ENCODE measurements at regions of chr3 and their contacts with region 1.

Region 1: DNA sequence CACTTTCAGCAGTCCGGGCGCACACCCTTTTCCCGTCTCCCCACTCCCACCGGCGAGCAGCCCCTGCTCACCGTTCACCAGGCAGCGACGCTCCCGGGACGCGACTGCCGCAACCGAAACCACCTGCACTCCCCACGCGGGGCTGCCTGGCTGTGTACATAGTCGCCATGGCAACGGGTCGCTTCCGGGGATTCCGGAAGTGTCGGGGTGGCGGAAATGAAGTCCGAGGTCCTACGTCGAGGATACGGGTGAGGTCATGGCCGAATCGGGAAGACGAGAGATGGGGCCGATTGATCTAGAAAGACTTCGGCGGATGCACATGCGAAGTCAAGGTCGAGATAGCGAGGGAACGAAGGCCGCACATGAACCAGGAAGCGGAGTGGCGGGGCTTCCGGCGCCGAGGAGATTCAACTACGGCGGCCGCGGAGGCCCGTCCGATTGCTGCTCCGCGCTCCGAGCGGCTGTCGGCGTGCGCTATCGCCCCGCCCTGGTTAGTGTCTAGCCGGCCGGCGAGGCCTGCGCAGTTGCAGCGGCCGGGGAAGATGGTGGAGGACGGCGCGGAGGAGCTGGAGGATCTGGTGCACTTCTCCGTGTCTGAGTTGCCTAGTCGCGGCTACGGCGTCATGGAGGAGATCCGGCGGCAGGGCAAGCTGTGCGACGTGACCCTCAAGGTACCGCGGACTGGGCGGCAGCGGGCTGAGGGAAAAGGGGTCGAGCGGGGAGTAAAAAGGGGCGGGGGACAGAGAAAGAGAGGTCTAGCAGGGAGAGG is at the starts of genes KIF9 and KLHL18:
- DNase-seq: peak; percentile 82 to 97
- H3K4me3 ChIP-seq: peak within 1 kb of the TSS; percentile 74
- H3K27ac ChIP-seq: peak within 1 kb of the TSS; percentile 89 to 94
- H3K4me1 ChIP-seq: peaks cover 7 to 27% of the 10 kb centered on the region in 2 donors
- H3K27me3 ChIP-seq: no peaks in the 10 kb centered on the region
- CTCF ChIP-seq: no peak
- total RNA-seq, gene KIF9: not detected
- total RNA-seq, gene KLHL18: 1.8 TPM

Region 2: DNA sequence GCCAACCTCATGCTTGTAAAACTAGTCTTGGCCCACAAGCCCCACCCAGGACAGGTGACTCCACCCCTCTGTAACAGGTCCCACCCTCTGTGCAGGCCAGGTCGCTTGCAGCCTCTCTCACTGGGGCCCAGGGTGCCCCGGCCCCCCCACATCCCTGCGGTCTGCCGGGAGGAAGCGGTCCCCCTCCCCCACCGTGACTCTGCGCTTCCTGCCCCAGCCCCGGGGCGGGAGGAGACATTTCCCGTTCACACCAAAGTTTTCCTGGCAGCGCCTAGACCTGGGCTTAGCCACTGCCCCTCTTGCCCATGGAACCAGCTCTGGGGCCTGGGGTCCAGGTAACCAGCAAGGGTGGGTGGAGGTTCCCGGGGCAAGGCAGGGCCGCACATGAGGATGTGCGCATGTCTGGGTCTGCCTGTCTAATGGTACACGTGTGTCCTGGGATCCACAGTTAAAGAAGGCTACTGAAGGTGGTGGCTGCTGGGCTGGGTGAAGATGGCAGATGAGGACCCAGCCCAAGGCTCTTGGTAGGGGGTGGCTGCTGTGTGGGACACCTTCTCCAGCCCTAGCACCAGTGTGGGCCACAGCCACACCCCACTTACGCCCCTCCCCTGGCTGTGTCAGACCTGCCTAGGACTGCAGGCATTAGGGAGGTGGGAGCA is 294.7 kb before region 1 on chr3:
- intact Hi-C with region 1: no loop called
- DNase-seq: no peak
- H3K4me3 ChIP-seq: no peak overlapping the region
- H3K27ac ChIP-seq: peak overlapping the region in 1 of 2 donors; percentile 15
- H3K4me1 ChIP-seq: no peaks in the 10 kb centered on the region
- H3K27me3 ChIP-seq: no peaks in the 10 kb centered on the region
- CTCF ChIP-seq: no peak

Region 3: DNA sequence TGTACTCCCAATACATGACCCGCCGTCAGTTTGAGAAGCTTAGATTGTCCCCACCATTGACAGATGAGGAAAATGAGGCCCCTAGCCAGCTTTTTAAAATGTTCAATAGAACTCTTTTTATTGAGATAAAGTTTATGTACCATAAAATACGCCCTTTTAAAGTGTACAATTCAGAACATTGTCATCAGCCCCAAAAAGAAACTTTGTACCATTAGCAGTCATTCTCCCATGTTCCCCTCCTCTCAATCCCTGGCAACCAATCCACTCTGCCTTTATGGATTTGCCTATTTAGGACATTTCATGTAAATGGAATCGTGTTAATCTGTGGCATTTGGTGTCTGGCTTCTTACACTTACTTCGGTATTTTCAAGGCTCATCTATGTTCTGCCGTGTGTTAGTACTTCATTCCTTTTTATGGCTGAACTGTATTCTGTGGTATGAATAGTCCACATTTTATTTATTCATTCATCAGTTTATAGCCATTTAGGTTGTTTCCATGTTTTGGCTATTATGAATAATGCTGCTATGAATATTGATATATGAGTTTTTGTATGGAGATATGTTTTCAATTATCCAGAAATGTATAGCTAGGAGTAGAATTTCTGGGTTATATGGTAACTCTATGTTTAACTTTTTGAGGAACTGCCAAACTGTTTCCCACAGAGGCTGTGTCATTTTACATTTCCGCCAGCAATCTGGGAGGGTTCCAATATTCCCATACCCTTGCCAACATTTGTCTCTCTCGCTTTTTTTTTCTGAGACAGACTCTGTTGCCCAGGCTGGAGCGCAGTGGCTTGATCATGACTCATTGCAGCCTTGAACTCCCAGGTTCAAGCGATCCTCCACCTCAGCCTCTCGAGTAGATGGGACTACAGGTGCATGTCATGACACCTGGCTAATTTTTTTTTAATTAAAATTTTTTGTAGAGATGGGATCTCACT is 82.9 kb after region 1 on chr3:
- intact Hi-C with region 1: loop called (anchors 5 kb)
- DNase-seq: peak in 1 of 2 donors; percentile 66
- H3K4me3 ChIP-seq: no peak overlapping the region
- H3K27ac ChIP-seq: peak overlapping the region; percentile 20 to 37
- H3K4me1 ChIP-seq: peaks cover 0 to 6% of the 10 kb centered on the region in 2 donors
- H3K27me3 ChIP-seq: no peaks in the 10 kb centered on the region
- CTCF ChIP-seq: no peak

Measured in ascending aorta (tissue), 2 donors.